ENCODE measurements at regions of chr9 and their contacts with region 1.

Region 1: GRCh38 chr9:137772281-137772873 is 105.2 kb upstream of the CACNA1B start:
- DNase-seq: no peak
- ATAC-seq: peak; percentile 31
- H3K4me3 Mint-ChIP-seq: no peak overlapping the region
- H3K27ac Mint-ChIP-seq: peak overlapping the region; percentile 3
- H3K4me1 Mint-ChIP-seq: peaks cover 11% of the 10 kb centered on the region
- H3K27me3 Mint-ChIP-seq: no peaks in the 10 kb centered on the region
- CTCF ChIP-seq: no peak

Region 2: GRCh38 chr9:136392538-136393449 is 1379.6 kb before region 1 on chr9:
- CTCF ChIA-PET with region 1: no interaction called
- POLR2A ChIA-PET with region 1: no interaction called
- intact Hi-C with region 1: no loop called
- DNase-seq: no peak
- ATAC-seq: no peak
- H3K4me3 Mint-ChIP-seq: no peak overlapping the region
- H3K27ac Mint-ChIP-seq: no peak overlapping the region
- H3K4me1 Mint-ChIP-seq: no peaks in the 10 kb centered on the region
- H3K27me3 Mint-ChIP-seq: no peaks in the 10 kb centered on the region
- CTCF ChIP-seq: no peak

Region 3: GRCh38 chr9:137721899-137722298 is 50.5 kb before region 1 on chr9:
- CTCF ChIA-PET with region 1: no interaction called
- POLR2A ChIA-PET with region 1: no interaction called
- intact Hi-C with region 1: loop called (anchors 1 kb)
- DNase-seq: no peak
- ATAC-seq: no peak
- H3K4me3 Mint-ChIP-seq: no peak overlapping the region
- H3K27ac Mint-ChIP-seq: peak overlapping the region; percentile 84
- H3K4me1 Mint-ChIP-seq: peaks cover 37% of the 10 kb centered on the region
- H3K27me3 Mint-ChIP-seq: no peaks in the 10 kb centered on the region
- CTCF ChIP-seq: no peak

Region 4: DNA sequence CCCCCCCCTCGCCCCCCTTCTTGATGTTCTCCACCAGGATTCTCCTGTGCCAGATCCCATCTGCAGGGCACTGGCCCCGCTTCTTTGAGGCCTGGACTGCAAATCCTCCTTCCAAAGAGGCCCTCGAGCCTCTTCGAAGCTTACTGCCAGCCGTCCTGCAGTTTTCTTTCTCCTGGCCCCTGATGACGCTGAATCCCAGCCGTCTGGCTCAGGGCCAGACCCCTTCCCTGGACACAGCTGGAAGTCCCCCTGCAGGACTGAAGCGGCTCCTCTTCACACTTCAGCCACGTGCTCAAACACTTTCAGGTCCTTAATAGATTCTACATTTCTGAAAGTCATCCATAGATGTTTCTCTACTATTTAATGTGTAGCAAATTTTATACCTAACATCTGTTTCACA is 32.1 kb before region 1 on chr9:
- CTCF ChIA-PET with region 1: no interaction called
- POLR2A ChIA-PET with region 1: interaction called, 13 read pairs
- intact Hi-C with region 1: no loop called
- DNase-seq: no peak
- ATAC-seq: no peak
- H3K4me3 Mint-ChIP-seq: peak overlapping the region; percentile 41
- H3K27ac Mint-ChIP-seq: peak overlapping the region; percentile 90
- H3K4me1 Mint-ChIP-seq: peaks cover 70% of the 10 kb centered on the region
- H3K27me3 Mint-ChIP-seq: no peaks in the 10 kb centered on the region
- CTCF ChIP-seq: no peak

Measured in activated B cell treated with CpG ODN at 0.5 μM for 24 hours (primary cell).